OCI-LY7 (cell line): ENCODE measurements at regions of chr12 and their contacts with region 1.

Region 1: DNA sequence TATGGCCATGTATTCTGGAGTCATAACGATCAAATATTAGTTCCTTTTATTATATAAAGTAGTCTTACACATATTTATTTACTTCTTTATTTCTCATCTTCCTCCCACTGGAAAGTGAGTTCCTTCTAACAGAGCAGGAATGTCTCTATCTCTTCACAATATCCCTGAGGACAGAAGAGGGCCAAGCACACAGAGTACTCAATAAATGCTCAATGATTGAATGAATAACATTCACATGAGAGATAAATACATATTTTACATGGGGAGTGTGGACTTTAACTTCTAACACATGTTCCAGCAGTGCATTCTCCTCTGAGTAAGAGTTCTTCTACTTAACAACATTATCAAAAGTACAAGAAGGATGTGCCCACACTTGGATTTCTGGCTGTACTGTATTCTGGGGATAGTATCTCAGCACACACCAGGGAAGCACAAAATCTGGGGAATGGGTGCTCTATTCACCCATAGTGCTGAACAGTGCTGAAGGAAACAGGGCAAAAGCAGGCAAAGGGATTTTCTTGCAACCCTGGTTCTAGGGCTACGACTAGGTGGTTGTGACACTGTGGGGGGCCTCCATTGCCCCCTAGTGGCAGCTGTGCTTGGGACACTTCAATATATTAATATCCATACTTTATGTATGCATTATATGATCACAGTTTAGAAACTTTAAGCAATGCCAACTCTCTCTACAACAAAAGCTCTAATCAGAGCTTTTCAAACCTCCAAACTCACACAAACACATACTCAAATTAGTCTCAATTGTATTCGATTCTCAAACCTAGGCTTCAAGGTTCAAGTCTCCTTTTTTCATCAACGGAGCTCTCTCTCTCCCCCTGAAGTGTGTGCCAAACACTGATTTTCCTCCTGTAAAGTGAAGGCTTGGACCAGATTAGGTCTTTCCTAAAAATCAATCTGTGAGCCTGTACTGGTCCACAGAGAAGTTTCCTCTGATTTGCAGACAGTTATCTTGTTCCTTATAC is 115.5 kb downstream of the SLC2A13 start:
- DNase-seq: peak; percentile 58
- H3K4me3 ChIP-seq: no peak overlapping the region
- H3K27ac ChIP-seq: no peak overlapping the region
- H3K4me1 ChIP-seq: no peaks in the 10 kb centered on the region
- CTCF ChIP-seq: peak; percentile 94

Region 2: GRCh38 chr12:39764944-39765560 is 225.4 kb before region 1 on chr12:
- CTCF ChIA-PET with region 1: no interaction called
- POLR2A ChIA-PET with region 1: no interaction called
- intact Hi-C with region 1: loop called (anchors 1 kb)
- DNase-seq: peak; percentile 41
- H3K4me3 ChIP-seq: no peak overlapping the region
- H3K27ac ChIP-seq: no peak overlapping the region
- H3K4me1 ChIP-seq: no peaks in the 10 kb centered on the region
- CTCF ChIP-seq: peak; percentile 85